HAP-1 (cell line): ENCODE measurements at regions of chr18 and their contacts with region 1.

Region 1: GRCh38 chr18:36284671-36285295 is 12.7 kb upstream of the FHOD3 start:
- DNase-seq: peak; percentile 61 to 75
- H3K4me3 ChIP-seq: no peak overlapping the region
- H3K4me1 ChIP-seq: no peaks in the 10 kb centered on the region
- H3K27me3 ChIP-seq: peaks cover 17% of the 10 kb centered on the region

Region 2: GRCh38 chr18:35756506-35757117 is 528.2 kb before region 1 on chr18:
- in situ Hi-C with region 1: loop called (anchors 5 kb)
- DNase-seq: peak; percentile 59 to 70
- H3K4me3 ChIP-seq: no peak overlapping the region
- H3K4me1 ChIP-seq: no peaks in the 10 kb centered on the region
- H3K27me3 ChIP-seq: no peaks in the 10 kb centered on the region

Region 3: DNA sequence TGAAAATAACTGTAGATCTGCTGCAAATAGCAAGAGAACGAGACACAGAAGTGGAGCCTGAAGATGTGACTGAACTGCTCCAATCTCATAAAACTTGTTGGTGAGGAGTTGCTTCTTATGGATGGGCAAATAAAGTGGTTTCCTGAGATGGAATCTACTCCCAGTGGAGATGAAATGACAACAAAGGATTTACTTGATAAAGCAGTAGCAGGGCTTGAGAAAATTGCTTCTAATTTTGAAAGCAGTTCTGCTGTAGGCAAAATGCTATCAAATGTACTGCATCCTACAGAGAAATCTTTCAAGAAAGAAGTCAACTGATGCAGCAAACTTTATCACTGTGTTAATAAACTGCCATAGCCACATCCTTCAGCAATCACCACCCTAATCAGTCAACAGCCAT is 261.4 kb before region 1 on chr18:
- in situ Hi-C with region 1: loop called (anchors 5 kb)
- DNase-seq: no peak
- H3K4me3 ChIP-seq: no peak overlapping the region
- H3K4me1 ChIP-seq: peaks cover 4% of the 10 kb centered on the region
- H3K27me3 ChIP-seq: no peaks in the 10 kb centered on the region

Region 4: GRCh38 chr18:36095936-36096519 is 188.8 kb before region 1 on chr18:
- in situ Hi-C with region 1: loop called (anchors 5 kb)
- DNase-seq: peak in 1 of 2 experiments; percentile 64
- H3K4me3 ChIP-seq: no peak overlapping the region
- H3K4me1 ChIP-seq: peaks cover 4% of the 10 kb centered on the region; the same call in 1 of the 2 replicates
- H3K27me3 ChIP-seq: no peaks in the 10 kb centered on the region

Region 5: GRCh38 chr18:36217348-36217747 is 67.4 kb before region 1 on chr18:
- in situ Hi-C with region 1: no loop called
- DNase-seq: no peak
- H3K4me3 ChIP-seq: no peak overlapping the region
- H3K4me1 ChIP-seq: no peaks in the 10 kb centered on the region
- H3K27me3 ChIP-seq: no peaks in the 10 kb centered on the region